ENCODE measurements at regions of chr1 and their contacts with region 1.

Region 1: DNA sequence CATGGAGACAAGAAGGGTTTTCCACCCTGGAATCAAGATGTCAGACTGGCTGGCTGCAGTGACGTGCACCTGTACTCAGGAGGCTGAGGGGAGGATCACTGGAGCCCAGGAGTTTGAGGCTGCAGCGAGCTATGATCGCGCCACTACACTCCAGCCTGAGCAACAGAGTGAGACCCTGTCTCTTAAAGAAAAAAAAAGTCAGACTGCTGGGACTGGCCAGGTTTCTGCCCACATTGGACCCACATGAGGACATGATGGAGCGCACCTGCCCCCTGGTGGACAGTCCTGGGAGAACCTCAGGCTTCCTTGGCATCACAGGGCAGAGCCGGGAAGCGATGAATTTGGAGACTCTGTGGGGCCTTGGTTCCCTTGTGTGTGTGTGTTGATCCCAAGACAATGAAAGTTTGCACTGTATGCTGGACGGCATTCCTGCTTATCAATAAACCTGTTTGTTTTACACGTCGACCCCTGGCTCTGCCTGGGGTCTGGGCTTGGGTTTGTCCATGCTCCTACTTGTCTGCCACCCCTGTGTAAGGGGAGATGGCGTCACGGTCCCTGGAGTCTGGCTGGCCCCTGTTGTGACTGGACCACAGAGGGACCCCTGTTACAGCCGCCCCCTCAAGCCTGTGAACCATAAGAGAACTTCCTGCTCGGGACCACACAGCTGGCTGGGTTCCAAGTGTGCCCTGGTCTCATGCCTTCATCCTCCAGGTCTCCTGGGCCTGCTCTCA is 20.9 kb upstream of the VPS13D start:
- DNase-seq: peak; percentile 78 to 94 (median 86)
- ATAC-seq: peak; percentile 72
- H3K4me3 ChIP-seq: no peak overlapping the region
- H3K4me3 Mint-ChIP-seq: peak overlapping the region; percentile 35
- H3K27ac ChIP-seq: peak overlapping the region in 1 of 2 experiments; percentile 58
- H3K27ac Mint-ChIP-seq: peak overlapping the region; percentile 76
- H3K4me1 ChIP-seq: peaks cover 41% of the 10 kb centered on the region
- H3K4me1 Mint-ChIP-seq: peaks cover 54% of the 10 kb centered on the region
- H3K27me3 ChIP-seq: no peaks in the 10 kb centered on the region
- H3K27me3 Mint-ChIP-seq: no peaks in the 10 kb centered on the region
- CTCF ChIP-seq: peak; percentile 93

Region 2: DNA sequence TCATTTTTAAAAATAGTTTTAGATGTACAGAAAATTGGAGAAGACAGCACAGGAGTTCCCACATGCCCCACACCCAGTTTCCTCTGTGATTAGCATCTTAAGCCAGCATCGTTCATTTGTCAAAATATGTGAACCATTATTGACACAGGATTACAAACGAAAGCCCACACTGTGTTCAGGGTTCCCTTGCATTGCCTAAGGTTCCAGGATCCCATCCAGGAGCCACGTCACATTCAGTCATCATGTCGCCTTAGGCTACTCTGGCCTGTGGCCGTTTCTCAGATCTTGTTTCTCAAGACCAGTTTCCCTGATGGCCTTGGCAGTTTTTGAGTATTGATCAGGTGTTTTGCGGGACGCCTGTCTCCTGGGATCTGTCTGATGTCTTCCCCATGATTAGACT is 76.8 kb before region 1 on chr1:
- CTCF ChIA-PET with region 1: interaction called, 674 read pairs
- POLR2A ChIA-PET with region 1: no interaction called
- intact Hi-C with region 1: no loop called
- DNase-seq: no peak
- ATAC-seq: no peak
- H3K4me3 ChIP-seq: no peak overlapping the region
- H3K4me3 Mint-ChIP-seq: no peak overlapping the region
- H3K27ac ChIP-seq: peak overlapping the region in 1 of 2 experiments; percentile 82
- H3K27ac Mint-ChIP-seq: peak overlapping the region; percentile 52
- H3K4me1 ChIP-seq: peaks cover 33% of the 10 kb centered on the region
- H3K4me1 Mint-ChIP-seq: peaks cover 27% of the 10 kb centered on the region
- H3K27me3 ChIP-seq: no peaks in the 10 kb centered on the region
- H3K27me3 Mint-ChIP-seq: no peaks in the 10 kb centered on the region
- CTCF ChIP-seq: no peak

Region 3: GRCh38 chr1:12177999-12178441 is 30.9 kb before region 1 on chr1:
- CTCF ChIA-PET with region 1: interaction called, 15 read pairs
- POLR2A ChIA-PET with region 1: interaction called, 4 read pairs
- intact Hi-C with region 1: loop called in 1 of 2 experiments (anchors 2 kb)
- DNase-seq: peak; percentile 77 to 97 (median 95)
- ATAC-seq: peak; percentile 68
- H3K4me3 ChIP-seq: peak overlapping the region; percentile 34 to 36
- H3K4me3 Mint-ChIP-seq: peak overlapping the region; percentile 82
- H3K27ac ChIP-seq: peak overlapping the region; percentile 71 to 94
- H3K27ac Mint-ChIP-seq: peak overlapping the region; percentile 99
- H3K4me1 ChIP-seq: peaks cover 75% of the 10 kb centered on the region
- H3K4me1 Mint-ChIP-seq: peaks cover 77% of the 10 kb centered on the region
- H3K27me3 ChIP-seq: no peaks in the 10 kb centered on the region
- H3K27me3 Mint-ChIP-seq: no peaks in the 10 kb centered on the region
- CTCF ChIP-seq: no peak

Region 4: GRCh38 chr1:12191242-12192032 is 17.5 kb before region 1 on chr1:
- CTCF ChIA-PET with region 1: interaction called, 16 read pairs
- POLR2A ChIA-PET with region 1: no interaction called
- intact Hi-C with region 1: loop called in 1 of 2 experiments (anchors 2 kb)
- DNase-seq: no peak
- ATAC-seq: peak; percentile 14
- H3K4me3 ChIP-seq: no peak overlapping the region
- H3K4me3 Mint-ChIP-seq: no peak overlapping the region
- H3K27ac ChIP-seq: no peak overlapping the region
- H3K27ac Mint-ChIP-seq: peak overlapping the region; percentile 45
- H3K4me1 ChIP-seq: peaks cover 4% of the 10 kb centered on the region
- H3K4me1 Mint-ChIP-seq: peaks cover 13% of the 10 kb centered on the region
- H3K27me3 ChIP-seq: no peaks in the 10 kb centered on the region
- H3K27me3 Mint-ChIP-seq: no peaks in the 10 kb centered on the region
- CTCF ChIP-seq: no peak

Region 5: DNA sequence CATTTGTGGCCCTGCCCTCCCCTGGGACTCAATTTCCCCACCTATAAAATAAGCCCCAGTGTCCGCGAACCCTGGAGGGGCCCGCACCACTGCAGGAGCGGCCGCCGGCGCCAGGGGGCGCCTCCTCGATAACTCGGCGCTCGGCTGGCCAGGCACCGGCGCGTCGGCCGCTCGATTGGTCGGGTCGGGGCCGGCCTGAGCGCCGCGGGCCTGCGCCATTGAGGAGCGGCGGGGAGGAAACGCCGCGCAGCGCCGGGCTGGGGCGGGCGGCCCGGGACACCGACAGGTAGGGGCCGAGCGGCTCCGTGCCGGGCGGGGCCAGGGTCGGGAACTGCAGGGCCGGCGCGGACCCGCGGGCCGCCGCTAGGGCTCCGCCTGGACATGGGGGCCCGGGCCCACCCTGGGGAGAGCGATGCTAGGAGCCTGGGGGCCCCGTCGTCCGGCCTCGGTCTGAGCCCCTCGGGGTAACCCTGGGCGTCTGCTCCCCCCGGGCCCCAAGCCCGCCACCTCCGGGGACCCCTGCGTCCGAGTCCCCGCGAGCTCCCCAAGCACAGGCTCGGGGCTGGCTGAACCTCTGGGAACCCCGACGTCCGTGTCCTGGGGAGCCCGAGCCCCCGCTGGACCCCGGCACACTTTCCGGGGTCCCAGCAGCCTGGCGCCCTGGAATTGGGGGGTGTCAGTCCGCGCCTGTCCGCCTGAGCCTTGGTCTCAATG is 21.1 kb after region 1 on chr1 and contains the start of gene VPS13D:
- CTCF ChIA-PET with region 1: interaction called, 5 read pairs
- POLR2A ChIA-PET with region 1: interaction called, 4 read pairs
- intact Hi-C with region 1: loop called in 1 of 2 experiments (anchors 2 kb)
- DNase-seq: peak; percentile 68 to 91 (median 84)
- ATAC-seq: peak; percentile 95
- H3K4me3 ChIP-seq: peak within 1 kb of the TSS; percentile 95 to 97
- H3K4me3 Mint-ChIP-seq: peak within 1 kb of the TSS; percentile 93
- H3K27ac ChIP-seq: peak within 1 kb of the TSS; percentile 50 to 70
- H3K27ac Mint-ChIP-seq: peak within 1 kb of the TSS; percentile 86
- H3K4me1 ChIP-seq: peaks cover 15% of the 10 kb centered on the region
- H3K4me1 Mint-ChIP-seq: peaks cover 30% of the 10 kb centered on the region
- H3K27me3 ChIP-seq: no peaks in the 10 kb centered on the region
- H3K27me3 Mint-ChIP-seq: no peaks in the 10 kb centered on the region
- CTCF ChIP-seq: peak; percentile 98
- total RNA-seq, gene VPS13D: 55.8 to 58.7 TPM

Region 6: DNA sequence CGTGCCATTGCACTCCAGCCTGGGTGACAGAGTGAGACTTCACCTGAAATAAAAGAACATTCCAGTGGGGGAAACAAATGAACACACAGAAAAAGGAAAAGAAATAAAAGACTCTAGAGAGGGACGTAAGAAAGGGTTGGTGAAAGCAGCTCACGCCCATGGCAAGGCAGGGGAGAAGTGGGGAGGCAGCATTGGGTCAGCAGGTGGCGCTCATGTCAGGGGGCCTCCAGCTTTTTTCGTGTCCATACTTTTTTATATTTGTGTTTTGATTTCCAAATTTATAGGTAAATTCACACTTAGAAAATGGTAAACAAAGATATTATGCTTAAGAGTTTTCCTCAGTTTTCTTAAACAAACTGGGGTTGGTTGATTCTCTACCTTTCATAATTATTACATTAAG is 66.4 kb after region 1 on chr1:
- CTCF ChIA-PET with region 1: no interaction called
- POLR2A ChIA-PET with region 1: no interaction called
- intact Hi-C with region 1: no loop called
- DNase-seq: peak in 8 of 9 experiments; percentile 5 to 52 (median 34)
- ATAC-seq: no peak
- H3K4me3 ChIP-seq: no peak overlapping the region
- H3K4me3 Mint-ChIP-seq: no peak overlapping the region
- H3K27ac ChIP-seq: no peak overlapping the region
- H3K27ac Mint-ChIP-seq: no peak overlapping the region
- H3K4me1 ChIP-seq: no peaks in the 10 kb centered on the region
- H3K4me1 Mint-ChIP-seq: peaks cover 6% of the 10 kb centered on the region
- H3K27me3 ChIP-seq: no peaks in the 10 kb centered on the region
- H3K27me3 Mint-ChIP-seq: no peaks in the 10 kb centered on the region
- CTCF ChIP-seq: peak; percentile 37

Measured in CD8-positive, alpha-beta T cell (primary cell).